Naive thymus-derived CD8-positive, alpha-beta T cell (primary cell): ENCODE measurements at regions of chr3 and their contacts with region 1.

Region 1: DNA sequence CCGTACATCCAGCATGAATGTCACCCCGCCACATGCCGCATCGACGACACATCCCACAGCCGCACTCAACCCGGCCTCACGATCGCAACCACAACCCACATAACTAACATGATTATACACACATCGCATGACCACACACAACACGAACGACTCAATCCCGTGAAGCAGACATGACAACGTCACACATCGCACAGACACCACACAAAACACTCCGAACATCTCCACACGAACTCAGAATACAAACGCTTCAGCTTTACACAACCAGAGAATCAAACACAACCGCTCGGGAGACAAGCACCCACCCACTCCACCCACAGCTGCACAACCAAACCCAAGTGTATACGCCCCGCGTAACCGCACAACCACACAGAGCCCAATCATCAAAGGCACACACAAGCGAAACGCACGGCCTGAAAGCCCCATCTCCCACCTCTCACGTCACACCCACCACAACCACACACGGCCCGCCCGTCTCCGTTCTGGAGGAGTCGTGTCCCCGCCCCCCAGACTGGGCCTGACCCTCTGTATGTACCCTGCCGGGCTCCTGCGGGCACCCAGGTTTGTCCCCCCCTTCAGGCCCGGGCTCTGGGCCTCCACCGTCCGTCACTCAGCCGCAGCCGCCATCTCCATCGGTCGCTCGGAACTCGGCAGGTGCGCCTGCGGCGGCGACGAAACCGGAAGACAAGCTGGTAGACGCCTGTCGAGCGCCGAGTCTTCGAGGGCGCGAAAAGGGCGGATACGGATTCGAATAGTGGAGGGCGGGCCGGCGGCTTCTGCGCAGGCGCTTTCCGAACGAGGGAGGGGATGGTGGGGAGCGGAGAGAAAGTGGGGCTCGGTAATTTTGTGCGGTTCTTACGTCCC is at the start of gene RBSN:
- DNase-seq: peak; percentile 89 to 98 (median 95)
- ATAC-seq: peak; percentile 76 to 79
- H3K4me3 Mint-ChIP-seq: peak within 1 kb of the TSS; percentile 89 to 99 (median 94)
- H3K27ac Mint-ChIP-seq: peak within 1 kb of the TSS; percentile 87 to 98 (median 96)
- H3K4me1 Mint-ChIP-seq: peaks cover 14 to 38% (median 29%) of the 10 kb centered on the region in 4 donors
- H3K27me3 Mint-ChIP-seq: peaks cover 0 to 9% (median 2%) of the 10 kb centered on the region in 5 donors
- polyA plus RNA-seq, gene RBSN: 16.3 to 20.3 (median 18.9) TPM

Region 2: GRCh38 chr3:14947886-14948555 is 150.7 kb before region 1 on chr3:
- POLR2A ChIA-PET with region 1: interaction called, 14 read pairs
- DNase-seq: peak; percentile 92 to 99 (median 96)
- ATAC-seq: peak; percentile 86 to 89
- H3K4me3 Mint-ChIP-seq: peak overlapping the region; percentile 93 to 100 (median 100)
- H3K27ac Mint-ChIP-seq: peak overlapping the region; percentile 99 to 100 (median 100)
- H3K4me1 Mint-ChIP-seq: peaks cover 25 to 71% (median 64%) of the 10 kb centered on the region in 4 donors
- H3K27me3 Mint-ChIP-seq: no peaks in the 10 kb centered on the region

Region 3: DNA sequence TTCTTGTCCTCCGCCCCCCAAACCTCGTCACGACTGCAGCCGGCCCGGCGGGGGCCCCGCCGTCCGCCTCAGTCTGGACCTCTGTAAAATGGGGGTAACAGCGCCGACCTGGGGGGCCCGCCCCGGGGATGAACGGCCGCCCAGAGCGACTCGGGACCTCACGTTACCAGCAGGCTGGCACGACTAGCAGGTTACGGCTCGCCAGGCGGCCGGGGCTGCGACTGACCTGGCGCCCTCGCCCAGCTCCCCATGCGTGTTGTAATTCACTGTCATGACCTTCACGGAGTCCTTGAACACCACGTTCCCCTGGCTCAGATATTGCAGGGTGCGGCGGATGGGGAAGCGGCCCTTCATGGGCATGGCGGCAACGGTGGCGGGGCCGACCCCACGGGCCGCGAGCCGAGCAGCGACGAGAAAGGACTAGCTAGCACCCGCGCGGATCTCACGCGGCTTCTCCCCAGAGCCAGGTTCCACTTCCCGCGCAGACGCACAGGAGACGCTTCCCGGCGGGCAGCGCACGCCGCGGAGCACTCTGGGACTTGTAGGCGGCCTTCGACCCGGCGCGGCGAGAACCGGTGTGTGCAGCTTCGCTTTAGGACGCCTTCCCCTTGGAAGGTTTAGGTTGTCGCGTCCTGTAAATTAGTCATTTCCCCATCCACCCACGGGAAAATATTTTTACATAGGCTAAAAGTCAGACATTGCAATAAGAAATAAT is 33.7 kb before region 1 on chr3 and contains the start of gene MRPS25:
- POLR2A ChIA-PET with region 1: interaction called, 22 read pairs
- DNase-seq: peak; percentile 79 to 93 (median 88)
- ATAC-seq: peak; percentile 97
- H3K4me3 Mint-ChIP-seq: peak within 1 kb of the TSS; percentile 93 to 99 (median 96)
- H3K27ac Mint-ChIP-seq: peak within 1 kb of the TSS; percentile 92 to 98 (median 96)
- H3K4me1 Mint-ChIP-seq: peaks cover 13 to 29% (median 22%) of the 10 kb centered on the region in 4 donors
- H3K27me3 Mint-ChIP-seq: no peaks in the 10 kb centered on the region
- polyA plus RNA-seq, gene MRPS25: 23.5 to 27.7 (median 27.3) TPM